ENCODE measurements at regions of chr9 and their contacts with region 1.

Region 1: GRCh38 chr9:111983484-111983908 is 86.9 kb downstream of the UGCG start:
- DNase-seq: peak; percentile 94
- ATAC-seq: peak; percentile 66
- H3K4me3 ChIP-seq: peak overlapping the region; percentile 7; the same call in 1 of the 2 replicates
- H3K27ac ChIP-seq: peak overlapping the region; percentile 99
- H3K4me1 ChIP-seq: peaks cover 62% of the 10 kb centered on the region
- H3K27me3 ChIP-seq: no peaks in the 10 kb centered on the region
- CTCF ChIP-seq: no peak
- EP300 ChIP-seq: peak; percentile 64 to 78; a peak in 2 of 4 replicates
- POLR2A ChIP-seq: peak; percentile 68
- RAD21 ChIP-seq: no peak

Region 2: GRCh38 chr9:111759762-111760639 is 223.5 kb before region 1 on chr9:
- CTCF ChIA-PET with region 1: no interaction called
- POLR2A ChIA-PET with region 1: no interaction called
- RAD21 ChIA-PET with region 1: interaction called, 3 read pairs
- SMC1A ChIA-PET with region 1: interaction called, 4 read pairs
- in situ Hi-C with region 1: no loop called
- intact Hi-C with region 1: loop called (anchors 10 kb)
- DNase-seq: peak; percentile 79
- ATAC-seq: peak; percentile 97
- H3K4me3 ChIP-seq: no peak overlapping the region
- H3K27ac ChIP-seq: no peak overlapping the region
- H3K4me1 ChIP-seq: no peaks in the 10 kb centered on the region
- H3K27me3 ChIP-seq: no peaks in the 10 kb centered on the region
- CTCF ChIP-seq: peak; percentile 51 to 73 (median 56); a peak in 4 of 6 replicates
- EP300 ChIP-seq: no peak
- POLR2A ChIP-seq: no peak
- RAD21 ChIP-seq: peak; percentile 95

Region 3: GRCh38 chr9:111902396-111903147 is 80.9 kb before region 1 on chr9:
- CTCF ChIA-PET with region 1: interaction called, 13 read pairs
- POLR2A ChIA-PET with region 1: interaction called, 7 read pairs
- RAD21 ChIA-PET with region 1: interaction called, 14 read pairs
- SMC1A ChIA-PET with region 1: interaction called, 13 read pairs
- in situ Hi-C with region 1: no loop called
- intact Hi-C with region 1: loop called (anchors 2 kb)
- DNase-seq: no peak
- ATAC-seq: no peak
- H3K4me3 ChIP-seq: peak overlapping the region; percentile 80; the same call in 1 of the 2 replicates
- H3K27ac ChIP-seq: peak overlapping the region; percentile 37; the same call in 1 of the 2 replicates
- H3K4me1 ChIP-seq: peaks cover 26% of the 10 kb centered on the region
- H3K27me3 ChIP-seq: no peaks in the 10 kb centered on the region
- CTCF ChIP-seq: no peak
- EP300 ChIP-seq: no peak
- POLR2A ChIP-seq: no peak
- RAD21 ChIP-seq: no peak

Region 4: DNA sequence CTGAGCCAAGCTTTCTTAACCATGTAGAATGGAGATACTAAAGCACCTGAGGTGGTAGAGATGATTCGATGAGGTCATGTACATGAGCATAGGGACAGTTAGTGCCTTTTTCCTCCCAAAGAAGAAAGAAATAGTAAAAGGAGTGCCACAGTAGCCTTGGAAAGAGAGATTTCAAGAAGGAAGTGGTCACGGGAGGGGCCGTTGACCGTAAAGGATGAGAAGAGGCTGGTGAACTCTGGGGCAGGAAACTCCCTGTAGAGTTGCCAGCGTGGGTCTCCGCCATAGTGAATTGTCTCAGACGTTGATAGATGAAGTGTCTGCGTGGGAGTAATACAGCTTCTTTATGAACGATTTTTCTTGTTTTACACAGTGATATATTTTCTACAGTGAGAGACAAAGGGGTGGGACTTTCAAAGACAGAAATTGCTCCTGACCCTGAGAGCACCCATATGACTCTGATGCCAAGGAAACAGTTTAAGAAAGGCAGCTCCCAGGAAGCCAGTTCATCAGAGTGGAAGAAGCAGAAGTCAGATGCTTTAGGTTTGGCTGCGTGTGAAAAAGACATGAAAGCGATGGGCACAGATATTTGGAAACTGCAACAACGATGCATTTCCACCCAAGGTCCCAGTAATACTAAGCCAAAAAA is 45.6 kb before region 1 on chr9:
- CTCF ChIA-PET with region 1: interaction called, 4 read pairs
- POLR2A ChIA-PET with region 1: interaction called, 6 read pairs
- RAD21 ChIA-PET with region 1: interaction called, 24 read pairs
- SMC1A ChIA-PET with region 1: interaction called, 20 read pairs
- in situ Hi-C with region 1: no loop called
- intact Hi-C with region 1: loop called (anchors 2 kb)
- DNase-seq: peak; percentile 74
- ATAC-seq: peak; percentile 90
- H3K4me3 ChIP-seq: no peak overlapping the region
- H3K27ac ChIP-seq: peak overlapping the region; percentile 80
- H3K4me1 ChIP-seq: peaks cover 21% of the 10 kb centered on the region
- H3K27me3 ChIP-seq: no peaks in the 10 kb centered on the region
- CTCF ChIP-seq: no peak
- EP300 ChIP-seq: peak; percentile 68 to 77; a peak in 2 of 4 replicates
- POLR2A ChIP-seq: no peak; the same call in none of the 2 replicates
- RAD21 ChIP-seq: no peak

Region 5: GRCh38 chr9:112012026-112012902 is 28.8 kb after region 1 on chr9:
- CTCF ChIA-PET with region 1: interaction called, 15 read pairs
- POLR2A ChIA-PET with region 1: interaction called, 77 read pairs
- RAD21 ChIA-PET with region 1: interaction called, 85 read pairs
- SMC1A ChIA-PET with region 1: interaction called, 311 read pairs
- in situ Hi-C with region 1: no loop called
- intact Hi-C with region 1: loop called (anchors 1 kb)
- DNase-seq: peak; percentile 96
- ATAC-seq: peak; percentile 92
- H3K4me3 ChIP-seq: no peak overlapping the region
- H3K27ac ChIP-seq: peak overlapping the region; percentile 92
- H3K4me1 ChIP-seq: peaks cover 52% of the 10 kb centered on the region
- H3K27me3 ChIP-seq: no peaks in the 10 kb centered on the region
- CTCF ChIP-seq: no peak
- EP300 ChIP-seq: peak; percentile 96 to 97
- POLR2A ChIP-seq: peak; percentile 43; the same call in 1 of the 2 replicates
- RAD21 ChIP-seq: peak; percentile 35

Region 6: DNA sequence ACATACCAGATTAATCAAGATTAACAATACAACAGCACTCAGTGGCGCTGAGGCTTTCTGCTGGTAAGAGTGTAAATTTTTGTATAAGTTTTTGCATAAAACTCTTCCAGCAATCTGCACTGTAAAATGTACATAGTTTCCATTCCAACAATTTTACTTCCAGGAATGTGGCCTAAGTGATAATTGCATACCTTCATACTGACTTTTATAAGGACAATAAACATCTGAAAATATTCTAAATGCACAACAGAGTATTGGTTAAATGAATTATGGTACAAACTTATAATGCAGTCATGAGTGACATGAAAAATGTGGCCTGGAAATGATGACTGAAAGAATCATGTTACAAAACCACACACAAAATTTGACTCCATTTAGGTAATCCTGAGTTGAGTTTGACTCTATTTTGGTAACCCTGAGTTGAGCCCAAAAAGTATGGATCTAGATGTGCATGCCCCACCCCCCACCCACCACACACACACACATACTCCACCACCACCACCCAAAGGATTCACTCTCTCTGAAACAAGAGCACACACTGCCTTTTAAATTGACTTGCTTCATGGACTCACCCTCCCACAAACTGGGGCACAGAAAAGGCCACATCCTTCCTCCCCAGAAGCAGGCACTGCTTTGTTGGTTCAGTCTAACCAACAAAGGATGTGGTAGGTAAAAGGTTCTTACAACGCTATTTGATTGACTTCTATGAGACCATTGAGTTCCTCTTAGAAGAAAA is 54.0 kb after region 1 on chr9:
- CTCF ChIA-PET with region 1: interaction called, 10 read pairs
- POLR2A ChIA-PET with region 1: interaction called, 158 read pairs
- RAD21 ChIA-PET with region 1: interaction called, 174 read pairs
- SMC1A ChIA-PET with region 1: interaction called, 313 read pairs
- in situ Hi-C with region 1: no loop called
- intact Hi-C with region 1: no loop called
- DNase-seq: peak; percentile 97
- ATAC-seq: peak; percentile 71
- H3K4me3 ChIP-seq: no peak overlapping the region
- H3K27ac ChIP-seq: peak overlapping the region; percentile 97
- H3K4me1 ChIP-seq: peaks cover 63% of the 10 kb centered on the region
- H3K27me3 ChIP-seq: no peaks in the 10 kb centered on the region
- CTCF ChIP-seq: no peak
- EP300 ChIP-seq: peak; percentile 74 to 78; a peak in 3 of 4 replicates
- POLR2A ChIP-seq: peak; percentile 69
- RAD21 ChIP-seq: peak; percentile 44; the same call in 1 of the 2 replicates